Dorsolateral prefrontal cortex (tissue), 120 donors: ENCODE measurements at regions of chr11 and their contacts with region 1.

Region 1: DNA sequence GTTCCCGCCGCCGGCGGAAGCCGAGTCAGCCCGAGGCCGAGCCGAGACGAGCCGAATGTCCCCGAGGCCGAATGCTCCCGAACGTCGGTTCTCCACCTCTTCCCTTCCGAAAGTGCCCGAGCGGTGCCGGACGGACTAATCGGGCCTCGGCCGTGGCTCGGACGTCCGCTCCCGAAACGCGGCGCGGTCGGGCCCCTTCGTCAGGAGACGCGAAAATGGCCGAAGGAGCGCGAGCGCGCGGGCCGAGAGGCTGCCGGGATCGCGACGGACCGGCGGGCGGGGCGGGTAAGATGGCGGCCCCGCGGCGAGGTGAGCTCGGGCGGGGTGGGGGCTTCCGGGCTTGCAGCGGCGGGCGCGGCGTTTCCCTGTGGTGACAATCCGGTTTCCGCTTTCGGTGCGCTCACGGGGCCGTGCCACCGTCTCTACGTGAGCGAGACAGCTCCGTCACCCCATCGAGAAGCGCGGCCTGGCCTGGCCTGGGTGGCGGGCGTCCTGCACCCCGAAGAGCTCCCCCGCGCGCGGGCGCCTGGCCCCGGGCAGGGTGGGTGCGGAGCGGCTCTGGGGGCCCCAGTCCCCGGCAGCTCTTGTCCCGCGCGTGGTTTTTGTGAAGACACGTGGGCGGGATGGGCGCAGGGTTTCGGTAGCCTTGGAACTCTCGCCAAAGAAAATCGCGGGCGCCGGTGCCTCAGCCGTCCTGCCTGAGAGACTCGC is at the start of gene TMEM80:
- DNase-seq: peak; percentile 93 to 99 (median 98)
- H3K4me3 ChIP-seq: peak within 1 kb of the TSS; percentile 61 to 98 (median 92)
- H3K27ac ChIP-seq: peak within 1 kb of the TSS; percentile 97 to 100 (median 100)
- H3K27me3 ChIP-seq: no peaks in the 10 kb centered on the region
- CTCF ChIP-seq: peak in 7 of 56 donors; percentile 13 to 24 (median 21)
- total RNA-seq, gene TMEM80: 14.5 to 48.6 (median 27.2) TPM

Region 2: DNA sequence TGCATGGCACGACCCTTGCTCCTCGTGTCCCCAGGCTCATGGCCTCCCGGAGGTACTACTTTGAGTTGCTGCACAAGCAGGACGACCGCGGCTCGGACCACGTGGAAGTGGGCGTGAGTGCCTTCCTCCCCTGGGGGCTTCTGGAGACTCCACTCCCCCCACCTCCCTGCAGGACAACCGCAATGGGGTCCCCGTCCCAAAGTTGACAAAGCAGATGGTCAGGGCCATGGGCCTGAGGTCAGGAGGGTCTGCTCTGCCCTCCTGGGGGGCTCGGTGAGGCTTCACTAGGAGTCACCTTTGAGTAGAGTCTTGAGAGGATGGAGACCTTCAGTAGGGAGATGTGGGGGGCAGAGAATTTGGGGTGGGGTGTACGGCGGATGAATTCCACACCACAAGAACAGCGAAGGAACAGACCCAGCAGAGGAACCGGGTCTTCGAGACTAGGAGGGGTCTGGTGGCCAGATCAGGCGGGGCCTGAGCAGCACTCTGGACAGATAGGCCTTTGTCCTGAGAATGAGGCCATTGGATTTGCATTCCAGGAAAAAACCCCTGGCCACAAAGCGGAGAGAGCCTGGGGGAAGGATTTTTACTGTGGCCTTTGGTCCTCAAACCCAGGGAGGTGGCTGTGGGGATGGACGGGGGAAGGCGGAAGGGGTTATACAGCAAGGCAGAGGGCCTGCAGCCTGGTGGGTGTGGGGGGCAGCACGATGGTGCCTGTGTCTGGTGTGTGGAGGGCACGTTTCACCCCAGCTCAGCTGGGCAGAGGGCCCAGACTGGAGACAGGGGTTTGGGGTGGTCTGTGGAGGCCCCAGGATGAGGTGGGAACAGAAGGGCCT is 321.8 kb before region 1 on chr11:
- intact Hi-C with region 1: no loop called
- DNase-seq: peak in 5 of 10 donors; percentile 60 to 76 (median 71)
- H3K4me3 ChIP-seq: peak overlapping the region in 11 of 59 donors; percentile 1 to 49 (median 9)
- H3K27ac ChIP-seq: peak overlapping the region in 58 of 59 donors; percentile 58 to 97 (median 90)
- H3K27me3 ChIP-seq: no peaks in the 10 kb centered on the region
- CTCF ChIP-seq: no peak

Region 3: DNA sequence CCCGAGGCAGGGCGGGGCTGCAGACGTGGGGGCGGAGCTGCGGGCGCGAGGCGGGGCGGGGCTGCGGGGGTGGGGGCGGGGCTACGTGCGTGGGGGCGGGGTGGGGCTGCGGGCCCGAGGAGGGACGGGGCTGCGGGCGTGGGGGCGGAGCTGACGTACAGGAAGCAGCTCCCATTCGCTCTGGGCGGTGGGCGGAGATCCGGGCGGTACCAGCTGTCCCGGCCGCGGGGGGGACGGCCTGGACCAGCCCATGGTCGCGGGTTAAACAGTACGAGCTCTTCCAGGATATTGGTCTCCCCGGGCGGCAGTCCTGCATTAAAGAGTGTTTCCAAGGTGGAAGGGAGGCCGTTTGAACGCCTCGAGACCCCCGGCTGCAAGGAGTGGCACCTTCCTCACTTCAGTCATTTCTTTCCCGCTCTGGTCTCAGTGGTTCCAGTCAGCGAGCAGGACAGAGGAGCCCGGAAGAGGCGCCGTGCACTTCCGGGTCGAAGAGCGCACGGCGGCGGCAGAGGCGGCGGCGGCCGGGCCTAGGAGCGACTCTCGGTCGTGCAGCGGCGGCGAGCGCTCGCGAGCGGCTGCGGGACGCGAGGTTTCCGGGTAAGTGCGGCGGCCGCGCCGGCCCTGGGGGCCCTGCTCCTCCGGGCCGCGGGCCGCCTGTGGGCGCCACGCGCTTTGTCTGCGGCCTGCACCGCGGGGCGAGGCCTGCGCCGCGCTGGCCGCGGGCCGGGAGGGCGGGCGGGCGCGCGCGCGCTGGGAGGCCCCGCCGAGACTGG is 119.5 kb before region 1 on chr11 and contains the start of gene PHRF1:
- intact Hi-C with region 1: loop called in 1 of 2 experiments (anchors 10 kb)
- DNase-seq: peak; percentile 89 to 97 (median 94)
- H3K4me3 ChIP-seq: peak within 1 kb of the TSS; percentile 65 to 98 (median 88)
- H3K27ac ChIP-seq: peak within 1 kb of the TSS in 58 of 59 donors; percentile 53 to 99 (median 94)
- H3K27me3 ChIP-seq: no peaks in the 10 kb centered on the region
- CTCF ChIP-seq: peak in 12 of 56 donors; percentile 9 to 40 (median 24)
- total RNA-seq, gene PHRF1: 24.7 to 43.4 (median 32.3) TPM

Region 4: DNA sequence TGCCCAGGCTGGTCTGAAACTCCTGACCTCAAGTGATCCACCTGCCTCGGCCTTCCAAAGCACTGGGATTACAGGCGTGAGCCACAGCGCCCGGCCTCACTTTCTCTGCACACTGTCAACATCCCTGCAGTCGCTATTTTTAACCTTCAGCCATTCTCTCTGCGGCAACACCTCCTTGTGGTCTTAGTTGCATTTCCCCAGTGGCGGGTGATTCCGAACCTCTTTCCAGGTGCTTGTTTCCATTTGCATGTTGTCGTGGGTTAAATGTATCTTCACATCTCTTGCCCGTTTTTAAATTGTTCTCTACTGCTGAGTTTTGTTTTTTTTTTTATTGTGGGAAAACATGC is 66.5 kb before region 1 on chr11:
- intact Hi-C with region 1: no loop called
- DNase-seq: no peak
- H3K4me3 ChIP-seq: no peak overlapping the region
- H3K27ac ChIP-seq: peak overlapping the region in 9 of 59 donors; percentile 9 to 60 (median 31)
- H3K27me3 ChIP-seq: peaks cover 0 to 7% (median 0%) of the 10 kb centered on the region in 45 donors
- CTCF ChIP-seq: no peak

Region 5: GRCh38 chr11:665704-666281 is 29.9 kb before region 1 on chr11:
- intact Hi-C with region 1: no loop called
- DNase-seq: peak in 1 of 10 donors; percentile 80
- H3K4me3 ChIP-seq: no peak overlapping the region
- H3K27ac ChIP-seq: peak overlapping the region in 18 of 59 donors; percentile 3 to 66 (median 29)
- H3K27me3 ChIP-seq: no peaks in the 10 kb centered on the region
- CTCF ChIP-seq: no peak

Region 6: DNA sequence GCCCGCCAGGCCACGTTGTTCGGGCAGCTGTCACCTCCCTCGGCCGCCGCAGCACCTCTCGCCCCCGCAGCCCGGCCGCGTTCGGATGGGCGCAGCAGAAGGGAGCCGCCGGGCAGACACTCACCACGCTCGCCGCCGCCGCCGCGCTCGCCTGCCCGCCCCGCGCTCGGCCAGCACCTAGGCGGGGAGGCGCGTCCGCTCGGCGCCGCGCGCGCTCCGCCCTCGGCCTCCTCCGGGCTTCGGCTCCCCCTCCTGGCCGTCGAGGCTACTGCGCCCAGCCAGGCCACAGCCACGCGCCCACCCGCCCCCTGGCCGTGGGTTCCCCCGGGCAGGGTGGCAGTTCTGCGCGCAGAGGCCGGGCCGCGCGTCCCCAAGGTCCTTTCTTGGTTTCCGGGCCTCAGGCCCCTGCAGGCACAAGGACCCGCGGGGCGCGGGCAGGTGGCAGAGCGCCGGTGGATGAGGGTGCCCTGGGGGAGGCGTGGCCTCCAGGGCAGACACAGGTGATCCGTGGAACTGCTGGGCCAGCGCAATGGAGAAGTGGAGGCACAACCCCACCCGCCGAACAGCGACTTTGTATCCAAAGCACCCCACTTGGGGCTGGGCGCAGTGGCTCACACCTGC is 102.5 kb after region 1 on chr11 and contains the start of gene SLC25A22:
- intact Hi-C with region 1: no loop called
- DNase-seq: peak in 8 of 10 donors; percentile 57 to 86 (median 76)
- H3K4me3 ChIP-seq: peak within 1 kb of the TSS; percentile 61 to 91 (median 78)
- H3K27ac ChIP-seq: peak within 1 kb of the TSS in 58 of 59 donors; percentile 48 to 96 (median 84)
- H3K27me3 ChIP-seq: no peaks in the 10 kb centered on the region
- CTCF ChIP-seq: peak; percentile 48 to 95 (median 78)
- total RNA-seq, gene SLC25A22: 48.1 to 186 (median 122) TPM